ENCODE measurements at regions of chr10 and their contacts with region 1.

Region 1: GRCh38 chr10:87861953-87862678 is 1.2 kb downstream of the KLLN start:
- DNase-seq: peak; percentile 98 to 99 (median 98)
- ATAC-seq: peak; percentile 84
- H3K4me3 ChIP-seq: peak overlapping the region; percentile 84
- H3K4me1 ChIP-seq: no peaks in the 10 kb centered on the region
- CTCF ChIP-seq: no peak

Region 2: GRCh38 chr10:88172159-88172558 is 310.0 kb after region 1 on chr10:
- intact Hi-C with region 1: no loop called
- DNase-seq: no peak
- ATAC-seq: no peak
- H3K4me3 ChIP-seq: no peak overlapping the region
- H3K4me1 ChIP-seq: no peaks in the 10 kb centered on the region
- CTCF ChIP-seq: no peak

Region 3: DNA sequence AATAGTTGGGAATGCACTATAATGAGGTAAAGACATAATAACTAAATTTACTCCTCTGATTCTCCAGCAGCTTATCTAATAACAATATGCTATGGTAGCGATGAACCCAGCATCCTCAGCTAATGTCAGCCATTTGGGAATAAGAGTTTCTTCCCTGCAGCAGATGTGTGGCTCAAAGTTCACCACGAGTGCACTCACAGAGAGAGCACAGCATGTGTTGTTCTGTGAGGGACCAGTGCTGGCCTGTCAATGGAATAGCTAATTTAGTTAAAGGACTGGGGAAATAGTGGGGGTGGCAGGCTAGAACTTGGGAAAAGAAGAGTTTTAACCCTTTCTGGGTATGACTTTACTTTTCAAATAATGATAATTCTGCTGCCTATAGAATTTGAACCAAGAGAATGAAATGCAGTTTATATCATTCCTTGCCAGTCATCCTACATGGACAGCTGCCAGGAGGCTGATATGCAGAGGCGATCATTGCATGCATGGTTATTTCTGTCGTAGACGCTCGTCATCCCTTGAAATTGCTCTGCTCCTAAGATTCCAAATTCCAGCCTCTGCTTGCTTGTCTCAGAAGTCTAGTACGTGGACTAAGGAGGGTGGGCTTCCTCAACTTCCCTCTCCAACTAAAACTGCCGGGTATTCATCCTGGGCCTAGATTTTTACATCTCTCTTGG is 365.4 kb after region 1 on chr10:
- intact Hi-C with region 1: loop called in 1 of 2 experiments (anchors 10 kb)
- DNase-seq: peak in 1 of 3 donors; percentile 70
- ATAC-seq: peak; percentile 54
- H3K4me3 ChIP-seq: no peak overlapping the region
- H3K4me1 ChIP-seq: peaks cover 2% of the 10 kb centered on the region
- CTCF ChIP-seq: no peak

Region 4: GRCh38 chr10:88386821-88387773 is 525.0 kb after region 1 on chr10:
- intact Hi-C with region 1: loop called (anchors 5 to 10 kb)
- DNase-seq: peak in 1 of 3 donors; percentile 61
- ATAC-seq: peak; percentile 64
- H3K4me3 ChIP-seq: no peak overlapping the region
- H3K4me1 ChIP-seq: peaks cover 28% of the 10 kb centered on the region
- CTCF ChIP-seq: no peak

Measured in mucosa of descending colon (tissue), 3 donors.